CD4-positive, alpha-beta memory T cell (primary cell): ENCODE measurements at regions of chr10 and their contacts with region 1.

Region 1: GRCh38 chr10:122342293-122343134 is 32.0 kb upstream of the PLEKHA1 start:
- DNase-seq: peak; percentile 58 to 68 (median 65)
- H3K4me3 ChIP-seq: no peak overlapping the region
- H3K4me3 Mint-ChIP-seq: no peak overlapping the region
- H3K27ac ChIP-seq: no peak overlapping the region
- H3K27ac Mint-ChIP-seq: peak overlapping the region in 2 of 7 donors; percentile 50 to 75
- H3K4me1 ChIP-seq: no peaks in the 10 kb centered on the region
- H3K4me1 Mint-ChIP-seq: peaks cover 3 to 9% (median 6%) of the 10 kb centered on the region in 4 donors
- H3K27me3 ChIP-seq: no peaks in the 10 kb centered on the region
- H3K27me3 Mint-ChIP-seq: peaks cover 0 to 1% of the 10 kb centered on the region in 2 donors

Region 2: GRCh38 chr10:122286867-122287266 is 55.6 kb before region 1 on chr10:
- CTCF ChIA-PET with region 1: no interaction called
- POLR2A ChIA-PET with region 1: no interaction called
- intact Hi-C with region 1: no loop called
- DNase-seq: no peak
- H3K4me3 ChIP-seq: no peak overlapping the region
- H3K4me3 Mint-ChIP-seq: no peak overlapping the region
- H3K27ac ChIP-seq: no peak overlapping the region
- H3K27ac Mint-ChIP-seq: peak overlapping the region in 1 of 7 donors; percentile 75
- H3K4me1 ChIP-seq: no peaks in the 10 kb centered on the region
- H3K4me1 Mint-ChIP-seq: peaks cover 0 to 11% (median 3%) of the 10 kb centered on the region in 4 donors
- H3K27me3 ChIP-seq: no peaks in the 10 kb centered on the region
- H3K27me3 Mint-ChIP-seq: peaks cover 3 to 16% of the 10 kb centered on the region in 2 donors

Region 3: DNA sequence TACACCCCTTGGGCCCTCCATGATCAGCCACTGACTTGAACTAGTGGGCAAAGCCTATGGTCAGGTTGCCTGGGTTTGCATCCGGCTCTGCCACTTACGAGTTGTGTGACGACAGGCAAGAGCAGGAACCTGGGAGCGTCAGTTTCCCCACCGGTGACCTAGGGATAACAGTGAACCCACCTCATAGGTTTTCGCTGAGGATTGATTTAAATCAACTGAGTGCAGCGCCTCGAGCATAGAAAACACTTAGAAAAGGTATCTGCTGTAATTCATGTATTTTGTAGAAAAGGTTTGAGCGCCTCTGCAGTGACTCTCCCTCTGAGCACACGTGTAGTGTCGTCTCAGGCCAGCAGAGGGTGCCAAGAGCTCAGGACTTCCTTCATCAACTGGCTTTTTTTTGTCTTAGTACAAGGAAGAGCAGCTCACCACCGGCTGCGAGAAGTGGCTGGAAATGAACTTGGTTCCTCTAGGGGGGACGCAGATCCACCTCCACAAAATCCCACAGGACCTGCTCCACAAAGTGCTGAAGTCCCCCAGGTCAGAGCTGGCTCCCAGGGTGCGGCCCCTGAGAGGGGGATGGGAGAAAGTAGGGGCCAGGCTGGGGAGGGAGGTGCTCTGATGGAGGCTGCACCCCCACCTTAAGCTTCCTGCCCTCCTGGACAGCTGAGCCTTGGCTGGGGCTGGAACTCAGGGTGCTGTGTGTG is 43.8 kb before region 1 on chr10:
- CTCF ChIA-PET with region 1: interaction called, 10 read pairs
- POLR2A ChIA-PET with region 1: interaction called, 3 read pairs
- intact Hi-C with region 1: loop called (anchors 1 kb)
- DNase-seq: peak; percentile 55 to 63 (median 56)
- H3K4me3 ChIP-seq: peak overlapping the region in 1 of 2 donors; percentile 6
- H3K4me3 Mint-ChIP-seq: peak overlapping the region in 6 of 8 donors; percentile 53 to 74 (median 60)
- H3K27ac ChIP-seq: no peak overlapping the region
- H3K27ac Mint-ChIP-seq: peak overlapping the region in 4 of 7 donors; percentile 1 to 54 (median 47)
- H3K4me1 ChIP-seq: peaks cover 17% of the 10 kb centered on the region
- H3K4me1 Mint-ChIP-seq: peaks cover 12 to 27% (median 16%) of the 10 kb centered on the region in 4 donors
- H3K27me3 ChIP-seq: no peaks in the 10 kb centered on the region
- H3K27me3 Mint-ChIP-seq: peaks cover 0 to 5% of the 10 kb centered on the region in 2 donors

Region 4: DNA sequence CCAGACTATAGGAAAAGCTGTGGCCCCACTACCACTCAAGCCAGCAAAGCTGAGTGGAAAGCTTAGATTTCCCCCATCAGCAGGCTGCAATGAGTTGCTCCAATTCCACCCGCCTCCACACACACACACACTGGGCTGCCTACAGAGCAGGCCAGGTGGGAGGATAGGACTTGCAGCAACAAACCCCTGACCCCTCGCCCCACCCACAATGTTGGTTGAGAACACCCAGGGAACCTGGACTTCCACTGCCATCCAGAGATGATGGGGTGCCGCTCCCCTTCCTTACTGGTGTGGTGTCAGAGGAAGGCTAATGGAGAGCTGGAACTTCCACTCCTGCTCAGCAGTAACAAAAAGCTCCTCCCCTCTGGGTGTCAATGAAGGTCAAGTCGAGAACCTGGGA is 15.2 kb after region 1 on chr10:
- CTCF ChIA-PET with region 1: interaction called, 13 read pairs
- POLR2A ChIA-PET with region 1: no interaction called
- intact Hi-C with region 1: no loop called
- DNase-seq: no peak
- H3K4me3 ChIP-seq: no peak overlapping the region
- H3K4me3 Mint-ChIP-seq: no peak overlapping the region
- H3K27ac ChIP-seq: no peak overlapping the region
- H3K27ac Mint-ChIP-seq: no peak overlapping the region
- H3K4me1 ChIP-seq: no peaks in the 10 kb centered on the region
- H3K4me1 Mint-ChIP-seq: no peaks in the 10 kb centered on the region
- H3K27me3 ChIP-seq: no peaks in the 10 kb centered on the region
- H3K27me3 Mint-ChIP-seq: peaks cover 0 to 4% of the 10 kb centered on the region in 2 donors

Region 5: GRCh38 chr10:122525788-122526187 is 183.3 kb after region 1 on chr10:
- CTCF ChIA-PET with region 1: no interaction called
- POLR2A ChIA-PET with region 1: no interaction called
- intact Hi-C with region 1: no loop called
- DNase-seq: peak in 4 of 5 donors; percentile 18 to 23 (median 22)
- H3K4me3 ChIP-seq: no peak overlapping the region
- H3K4me3 Mint-ChIP-seq: no peak overlapping the region
- H3K27ac ChIP-seq: no peak overlapping the region
- H3K27ac Mint-ChIP-seq: peak overlapping the region in 1 of 7 donors; percentile 7
- H3K4me1 ChIP-seq: no peaks in the 10 kb centered on the region
- H3K4me1 Mint-ChIP-seq: peaks cover 0 to 9% (median 3%) of the 10 kb centered on the region in 4 donors
- H3K27me3 ChIP-seq: no peaks in the 10 kb centered on the region
- H3K27me3 Mint-ChIP-seq: peaks cover 0 to 4% of the 10 kb centered on the region in 2 donors

Region 6: GRCh38 chr10:122551450-122551849 is 208.9 kb after region 1 on chr10:
- CTCF ChIA-PET with region 1: interaction called, 3 read pairs
- POLR2A ChIA-PET with region 1: no interaction called
- intact Hi-C with region 1: loop called (anchors 1 kb)
- DNase-seq: peak; percentile 38 to 49 (median 41)
- H3K4me3 ChIP-seq: no peak overlapping the region
- H3K4me3 Mint-ChIP-seq: peak overlapping the region in 7 of 8 donors; percentile 24 to 78 (median 61)
- H3K27ac ChIP-seq: no peak overlapping the region
- H3K27ac Mint-ChIP-seq: peak overlapping the region; percentile 69 to 90 (median 87)
- H3K4me1 ChIP-seq: peaks cover 24% of the 10 kb centered on the region
- H3K4me1 Mint-ChIP-seq: peaks cover 21 to 42% (median 27%) of the 10 kb centered on the region in 4 donors
- H3K27me3 ChIP-seq: no peaks in the 10 kb centered on the region
- H3K27me3 Mint-ChIP-seq: no peaks in the 10 kb centered on the region